Cardiac septum (tissue), 1 donor: ENCODE measurements at regions of chr7 and their contacts with region 1.

Region 1: DNA sequence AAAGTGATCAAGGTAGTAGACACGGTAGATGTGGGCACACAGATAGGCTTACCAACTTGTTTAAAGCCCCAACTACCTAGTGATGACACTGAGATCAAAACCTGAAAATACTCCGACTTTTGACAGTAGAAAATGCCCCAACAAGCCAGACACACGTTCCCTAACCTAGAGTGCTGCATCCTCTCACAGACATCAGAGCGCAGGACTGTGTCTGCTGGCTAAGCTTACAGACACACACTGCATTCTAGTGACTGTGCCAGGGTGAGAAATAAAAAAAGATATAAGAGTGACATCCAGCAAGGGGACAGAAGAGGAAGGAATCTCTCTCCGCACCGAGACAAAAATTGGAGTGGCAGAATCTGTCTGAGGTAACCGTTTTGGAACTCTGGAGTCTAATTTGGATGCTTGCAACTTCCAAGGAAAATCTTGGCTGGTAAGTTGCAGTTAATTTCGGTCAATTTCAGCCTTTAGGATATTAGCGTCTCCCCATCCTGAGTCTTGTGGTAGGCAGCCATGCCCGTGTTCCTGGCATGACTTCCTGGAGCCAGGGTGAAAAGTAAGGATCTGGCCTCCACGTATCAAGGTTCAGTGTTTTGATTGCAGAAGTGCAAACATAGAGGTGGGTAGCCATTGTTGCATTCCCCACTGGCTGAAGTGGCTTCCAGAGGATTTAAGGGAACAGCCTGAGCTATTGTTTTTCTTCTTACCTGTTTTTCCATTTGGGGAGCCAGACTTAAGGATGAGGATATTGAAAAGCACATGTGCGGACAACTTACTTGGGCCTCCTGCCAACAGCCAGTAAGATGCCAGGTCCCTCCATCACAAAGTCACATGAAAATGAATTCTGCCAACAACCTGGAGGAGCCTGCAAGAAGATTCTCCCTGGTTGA is 124.1 kb downstream of the SMURF1 start:
- DNase-seq: peak; percentile 33

Region 2: GRCh38 chr7:98974906-98975816 is 44.6 kb before region 1 on chr7:
- intact Hi-C with region 1: loop called (anchors 5 kb)
- DNase-seq: no peak

Region 3: GRCh38 chr7:99050971-99051370 is 31.2 kb after region 1 on chr7:
- intact Hi-C with region 1: no loop called
- DNase-seq: no peak